Activated T-helper 2 cell treated with anti-CD3 and anti-CD28 coated beads, Interferon-gamma antibody, Interleukin-2, Interleukin-4, amounts not matched to agents 10 μg/mL and 5 μg/mL and 100 μg/mL, durations not matched to agents 14 hours and 24 hours and 36 hours (primary cell): ENCODE measurements at regions of chr18 and their contacts with region 1.

Region 1: GRCh38 chr18:56112013-56112749 is 524.2 kb upstream of the TCF4 start:
- DNase-seq: peak; percentile 12
- H3K4me3 Mint-ChIP-seq: no peak overlapping the region
- H3K27ac Mint-ChIP-seq: peak overlapping the region; percentile 60
- H3K4me1 Mint-ChIP-seq: peaks cover 13% of the 10 kb centered on the region
- H3K27me3 Mint-ChIP-seq: peaks cover 2% of the 10 kb centered on the region

Region 2: GRCh38 chr18:55251254-55251971 is 860.8 kb before region 1 on chr18:
- intact Hi-C with region 1: loop called (anchors 1 kb)
- DNase-seq: no peak
- H3K4me3 Mint-ChIP-seq: no peak overlapping the region
- H3K27ac Mint-ChIP-seq: no peak overlapping the region
- H3K4me1 Mint-ChIP-seq: peaks cover 45% of the 10 kb centered on the region
- H3K27me3 Mint-ChIP-seq: no peaks in the 10 kb centered on the region

Region 3: DNA sequence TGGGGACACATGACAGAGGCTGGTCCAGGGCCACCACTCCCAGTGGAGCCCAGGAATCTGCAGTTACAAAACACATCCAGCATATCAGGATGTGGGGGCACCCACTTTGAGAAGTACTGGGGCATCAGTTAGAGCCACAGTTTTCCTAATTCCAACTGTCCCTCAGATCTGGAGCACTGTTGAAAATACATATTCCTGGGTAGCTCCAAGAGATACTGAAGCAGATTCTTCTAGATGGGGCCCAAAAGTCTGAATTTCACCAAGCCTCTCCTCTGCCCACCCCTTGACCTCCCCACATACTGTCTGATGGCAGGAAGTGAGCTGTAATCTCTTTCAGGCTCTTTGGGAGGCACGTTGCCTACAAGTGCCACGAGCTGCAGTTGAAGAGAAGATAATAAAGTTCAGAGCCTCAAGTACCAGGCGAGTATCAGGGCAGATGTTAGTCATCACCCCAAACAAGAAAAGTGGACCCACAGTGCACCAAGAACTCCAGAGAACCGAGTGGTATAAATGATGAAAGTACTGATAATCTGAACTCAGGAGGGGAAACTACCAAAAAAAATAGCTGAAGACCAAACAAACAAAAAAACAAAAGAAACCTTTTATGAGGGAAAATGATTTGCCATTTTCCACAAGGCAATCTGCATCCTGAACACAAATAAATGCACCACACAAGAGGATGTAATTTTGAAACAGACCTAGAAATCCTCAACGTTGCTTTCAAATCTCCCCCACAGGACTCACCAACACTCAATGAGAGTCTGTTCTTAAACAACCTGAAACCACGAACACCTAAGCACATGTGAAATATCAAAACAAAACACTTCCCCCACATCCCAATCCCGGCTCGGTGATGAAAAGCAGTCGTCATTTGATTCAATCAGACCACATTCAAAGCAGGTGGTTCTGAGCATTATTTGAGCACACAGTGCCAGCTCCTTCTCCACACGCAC is 622.9 kb before region 1 on chr18:
- intact Hi-C with region 1: loop called (anchors 10 kb)
- DNase-seq: no peak
- H3K4me3 Mint-ChIP-seq: peak overlapping the region; percentile 43
- H3K27ac Mint-ChIP-seq: peak overlapping the region; percentile 85
- H3K4me1 Mint-ChIP-seq: peaks cover 20% of the 10 kb centered on the region
- H3K27me3 Mint-ChIP-seq: peaks cover 28% of the 10 kb centered on the region

Region 4: GRCh38 chr18:56083097-56083521 is 29.1 kb before region 1 on chr18:
- intact Hi-C with region 1: no loop called
- DNase-seq: no peak
- H3K4me3 Mint-ChIP-seq: no peak overlapping the region
- H3K27ac Mint-ChIP-seq: no peak overlapping the region
- H3K4me1 Mint-ChIP-seq: no peaks in the 10 kb centered on the region
- H3K27me3 Mint-ChIP-seq: no peaks in the 10 kb centered on the region

Region 5: GRCh38 chr18:56716692-56717146 is 604.5 kb after region 1 on chr18:
- intact Hi-C with region 1: loop called (anchors 5 kb)
- DNase-seq: no peak
- H3K4me3 Mint-ChIP-seq: no peak overlapping the region
- H3K27ac Mint-ChIP-seq: peak overlapping the region; percentile 17
- H3K4me1 Mint-ChIP-seq: peaks cover 31% of the 10 kb centered on the region
- H3K27me3 Mint-ChIP-seq: no peaks in the 10 kb centered on the region

Region 6: GRCh38 chr18:57004366-57005121 is 892.4 kb after region 1 on chr18:
- intact Hi-C with region 1: loop called (anchors 5 kb)
- DNase-seq: no peak
- H3K4me3 Mint-ChIP-seq: peak overlapping the region; percentile 23
- H3K27ac Mint-ChIP-seq: peak overlapping the region; percentile 49
- H3K4me1 Mint-ChIP-seq: peaks cover 34% of the 10 kb centered on the region
- H3K27me3 Mint-ChIP-seq: no peaks in the 10 kb centered on the region